ENCODE measurements at regions of chr4 and their contacts with region 1.

Region 1: GRCh38 chr4:64399313-64400109 is 9.7 kb downstream of the TECRL start:
- DNase-seq: no peak
- ATAC-seq: peak in 3 of 8 donors; percentile 26 to 51 (median 33)
- H3K4me3 ChIP-seq: no peak overlapping the region
- H3K27ac ChIP-seq: peak overlapping the region in 2 of 10 donors; percentile 6 to 42
- H3K4me1 ChIP-seq: peaks cover 0 to 18% (median 0%) of the 10 kb centered on the region in 9 donors
- H3K27me3 ChIP-seq: no peaks in the 10 kb centered on the region
- CTCF ChIP-seq: no peak

Region 2: GRCh38 chr4:64341711-64342110 is 57.8 kb before region 1 on chr4:
- intact Hi-C with region 1: loop called in 3 of 10 experiments (anchors 2 to 10 kb)
- DNase-seq: peak; percentile 69 to 80
- ATAC-seq: peak; percentile 85 to 98 (median 94)
- H3K4me3 ChIP-seq: no peak overlapping the region
- H3K27ac ChIP-seq: peak overlapping the region in 7 of 10 donors; percentile 11 to 82 (median 60)
- H3K4me1 ChIP-seq: peaks cover 0 to 49% (median 17%) of the 10 kb centered on the region in 9 donors
- H3K27me3 ChIP-seq: no peaks in the 10 kb centered on the region
- CTCF ChIP-seq: peak in 1 of 9 donors; percentile 6

Region 3: GRCh38 chr4:65223601-65224000 is 824.1 kb after region 1 on chr4:
- intact Hi-C with region 1: no loop called
- DNase-seq: no peak
- ATAC-seq: no peak
- H3K4me3 ChIP-seq: no peak overlapping the region
- H3K27ac ChIP-seq: no peak overlapping the region
- H3K4me1 ChIP-seq: peaks cover 0 to 5% (median 0%) of the 10 kb centered on the region in 9 donors
- H3K27me3 ChIP-seq: no peaks in the 10 kb centered on the region
- CTCF ChIP-seq: no peak